ENCODE measurements at regions of chr18 and their contacts with region 1.

Region 1: GRCh38 chr18:48834413-48835031 is 116.2 kb downstream of the SMAD7 start:
- DNase-seq: peak; percentile 81
- ATAC-seq: peak; percentile 84
- H3K4me3 ChIP-seq: peak overlapping the region; percentile 70
- H3K27ac ChIP-seq: peak overlapping the region; percentile 93
- H3K4me1 ChIP-seq: peaks cover 41% of the 10 kb centered on the region
- H3K27me3 ChIP-seq: no peaks in the 10 kb centered on the region
- CTCF ChIP-seq: no peak
- EP300 ChIP-seq: no peak
- POLR2A ChIP-seq: peak; percentile 38
- RAD21 ChIP-seq: no peak

Region 2: GRCh38 chr18:48639772-48640432 is 194.6 kb before region 1 on chr18:
- CTCF ChIA-PET with region 1: no interaction called
- POLR2A ChIA-PET with region 1: no interaction called
- RAD21 ChIA-PET with region 1: no interaction called
- SMC1A ChIA-PET with region 1: no interaction called
- in situ Hi-C with region 1: no loop called
- intact Hi-C with region 1: no loop called
- DNase-seq: no peak
- ATAC-seq: peak; percentile 46; the same call in 1 of the 3 replicates
- H3K4me3 ChIP-seq: no peak overlapping the region
- H3K27ac ChIP-seq: no peak overlapping the region
- H3K4me1 ChIP-seq: no peaks in the 10 kb centered on the region
- H3K27me3 ChIP-seq: no peaks in the 10 kb centered on the region
- CTCF ChIP-seq: peak; percentile 19 to 36 (median 29); a peak in 5 of 6 replicates
- EP300 ChIP-seq: no peak
- POLR2A ChIP-seq: no peak
- RAD21 ChIP-seq: peak; percentile 44

Region 3: GRCh38 chr18:48711651-48712486 is 122.7 kb before region 1 on chr18:
- CTCF ChIA-PET with region 1: no interaction called
- POLR2A ChIA-PET with region 1: no interaction called
- RAD21 ChIA-PET with region 1: interaction called, 3 read pairs
- SMC1A ChIA-PET with region 1: no interaction called
- in situ Hi-C with region 1: no loop called
- intact Hi-C with region 1: loop called (anchors 5 kb)
- DNase-seq: no peak
- ATAC-seq: peak; percentile 85
- H3K4me3 ChIP-seq: no peak overlapping the region
- H3K27ac ChIP-seq: no peak overlapping the region
- H3K4me1 ChIP-seq: peaks cover 11% of the 10 kb centered on the region
- H3K27me3 ChIP-seq: no peaks in the 10 kb centered on the region
- CTCF ChIP-seq: peak; percentile 59 to 81 (median 60)
- EP300 ChIP-seq: no peak
- POLR2A ChIP-seq: no peak
- RAD21 ChIP-seq: peak; percentile 83

Region 4: GRCh38 chr18:48800876-48801727 is 33.4 kb before region 1 on chr18:
- CTCF ChIA-PET with region 1: interaction called, 4 read pairs
- POLR2A ChIA-PET with region 1: interaction called, 7 read pairs
- RAD21 ChIA-PET with region 1: interaction called, 48 read pairs
- SMC1A ChIA-PET with region 1: interaction called, 129 read pairs
- in situ Hi-C with region 1: no loop called
- intact Hi-C with region 1: loop called (anchors 2 kb)
- DNase-seq: peak; percentile 89
- ATAC-seq: peak; percentile 87
- H3K4me3 ChIP-seq: peak overlapping the region; percentile 36; the same call in 1 of the 2 replicates
- H3K27ac ChIP-seq: peak overlapping the region; percentile 92
- H3K4me1 ChIP-seq: peaks cover 52% of the 10 kb centered on the region
- H3K27me3 ChIP-seq: no peaks in the 10 kb centered on the region
- CTCF ChIP-seq: no peak
- EP300 ChIP-seq: peak; percentile 87 to 93
- POLR2A ChIP-seq: peak; percentile 60; the same call in 1 of the 2 replicates
- RAD21 ChIP-seq: no peak

Region 5: DNA sequence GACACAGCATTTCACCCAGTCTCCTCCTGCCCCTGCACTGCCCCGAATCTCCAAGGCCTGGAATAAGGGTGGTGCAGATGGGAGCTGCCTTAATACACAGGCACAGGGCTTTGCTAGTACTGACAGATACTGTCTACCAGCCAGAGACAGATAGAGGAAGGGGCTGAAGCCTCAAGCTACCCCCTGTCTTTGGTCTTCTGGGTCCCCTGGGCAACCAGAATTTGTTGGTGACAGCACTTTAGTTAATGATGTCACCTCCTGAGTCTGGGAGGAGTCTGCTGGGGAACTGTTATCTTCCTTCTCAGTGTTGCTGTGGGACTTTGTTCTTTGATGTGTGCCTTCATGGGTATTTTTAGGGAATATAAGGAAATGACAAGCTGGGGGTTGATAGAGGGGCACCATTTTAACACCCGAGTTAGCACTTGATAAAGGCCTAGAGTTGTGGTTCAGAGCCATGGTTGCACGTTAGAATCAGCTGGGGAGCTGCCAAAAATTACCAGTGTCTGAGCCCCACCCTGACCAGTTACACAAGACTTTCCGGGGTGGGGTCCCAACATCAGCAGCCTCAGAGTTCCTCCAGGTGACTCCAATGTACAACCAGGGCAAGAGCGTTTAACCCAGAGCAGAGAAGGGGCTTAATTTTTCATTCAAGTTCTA is 20.6 kb before region 1 on chr18:
- CTCF ChIA-PET with region 1: interaction called, 5 read pairs
- POLR2A ChIA-PET with region 1: interaction called, 17 read pairs
- RAD21 ChIA-PET with region 1: interaction called, 50 read pairs
- SMC1A ChIA-PET with region 1: interaction called, 129 read pairs
- in situ Hi-C with region 1: no loop called
- intact Hi-C with region 1: no loop called
- DNase-seq: no peak
- ATAC-seq: peak; percentile 70
- H3K4me3 ChIP-seq: no peak overlapping the region
- H3K27ac ChIP-seq: peak overlapping the region; percentile 81
- H3K4me1 ChIP-seq: peaks cover 33% of the 10 kb centered on the region
- H3K27me3 ChIP-seq: no peaks in the 10 kb centered on the region
- CTCF ChIP-seq: no peak
- EP300 ChIP-seq: no peak
- POLR2A ChIP-seq: no peak
- RAD21 ChIP-seq: no peak

Region 6: GRCh38 chr18:48868468-48869466 is 34.2 kb after region 1 on chr18:
- CTCF ChIA-PET with region 1: interaction called, 4 read pairs
- POLR2A ChIA-PET with region 1: interaction called, 11 read pairs
- RAD21 ChIA-PET with region 1: interaction called, 30 read pairs
- SMC1A ChIA-PET with region 1: interaction called, 45 read pairs
- in situ Hi-C with region 1: no loop called
- intact Hi-C with region 1: loop called (anchors 1 kb)
- DNase-seq: peak; percentile 96
- ATAC-seq: peak; percentile 92
- H3K4me3 ChIP-seq: 0 out of 2 replicates have a peak overlapping the region, but pooled peaks have one; percentile 20
- H3K27ac ChIP-seq: peak overlapping the region; percentile 97
- H3K4me1 ChIP-seq: peaks cover 29% of the 10 kb centered on the region
- H3K27me3 ChIP-seq: no peaks in the 10 kb centered on the region
- CTCF ChIP-seq: no peak
- EP300 ChIP-seq: peak; percentile 84 to 93
- POLR2A ChIP-seq: peak; percentile 73
- RAD21 ChIP-seq: peak; percentile 28; the same call in 1 of the 2 replicates

Region 7: GRCh38 chr18:48934723-48935432 is 100.4 kb after region 1 on chr18:
- CTCF ChIA-PET with region 1: no interaction called
- POLR2A ChIA-PET with region 1: interaction called, 9 read pairs
- RAD21 ChIA-PET with region 1: interaction called, 6 read pairs
- SMC1A ChIA-PET with region 1: interaction called, 9 read pairs
- in situ Hi-C with region 1: no loop called
- intact Hi-C with region 1: loop called (anchors 5 kb)
- DNase-seq: peak; percentile 71
- ATAC-seq: peak; percentile 71
- H3K4me3 ChIP-seq: peak overlapping the region; percentile 57
- H3K27ac ChIP-seq: peak overlapping the region; percentile 96
- H3K4me1 ChIP-seq: peaks cover 68% of the 10 kb centered on the region
- H3K27me3 ChIP-seq: no peaks in the 10 kb centered on the region
- CTCF ChIP-seq: no peak
- EP300 ChIP-seq: no peak; a peak in 1 of 4 replicates
- POLR2A ChIP-seq: peak; percentile 62; the same call in 1 of the 2 replicates
- RAD21 ChIP-seq: no peak